HepG2 (cell line): ENCODE measurements at regions of chr2 and their contacts with region 1.

Region 1: GRCh38 chr2:195106681-195107380 is 550.2 kb upstream of the SLC39A10 start:
- DNase-seq: no peak
- ATAC-seq: no peak
- H3K4me3 ChIP-seq: no peak overlapping the region
- H3K27ac ChIP-seq: no peak overlapping the region
- H3K4me1 ChIP-seq: no peaks in the 10 kb centered on the region
- H3K27me3 ChIP-seq: no peaks in the 10 kb centered on the region
- CTCF ChIP-seq: no peak
- EP300 ChIP-seq: no peak
- POLR2A ChIP-seq: no peak
- RAD21 ChIP-seq: no peak

Region 2: DNA sequence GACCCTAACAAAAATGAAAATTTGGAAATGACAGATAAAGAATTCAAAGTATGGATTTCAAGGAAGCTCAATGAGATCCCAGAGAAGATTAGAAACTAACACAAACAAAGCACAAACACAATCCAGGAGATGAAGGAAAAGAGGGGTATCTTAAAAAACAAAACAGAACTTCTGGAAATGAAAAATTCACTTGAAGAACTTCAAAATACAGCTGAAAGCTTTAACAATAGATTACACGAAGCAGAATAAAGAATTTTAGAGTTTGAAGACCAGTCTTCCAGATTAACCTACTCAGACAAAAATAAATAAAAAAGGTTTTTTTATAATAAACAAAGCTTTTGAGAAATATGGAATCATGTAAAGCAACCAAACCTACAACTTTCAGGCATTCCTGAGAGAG is 121.6 kb before region 1 on chr2:
- CTCF ChIA-PET with region 1: no interaction called
- POLR2A ChIA-PET with region 1: no interaction called
- in situ Hi-C with region 1: no loop called
- intact Hi-C with region 1: no loop called
- DNase-seq: no peak
- ATAC-seq: no peak
- H3K4me3 ChIP-seq: no peak overlapping the region
- H3K27ac ChIP-seq: no peak overlapping the region
- H3K4me1 ChIP-seq: no peaks in the 10 kb centered on the region
- H3K27me3 ChIP-seq: no peaks in the 10 kb centered on the region
- CTCF ChIP-seq: no peak
- EP300 ChIP-seq: no peak
- POLR2A ChIP-seq: no peak
- RAD21 ChIP-seq: no peak

Region 3: GRCh38 chr2:195021711-195022507 is 84.9 kb before region 1 on chr2:
- CTCF ChIA-PET with region 1: no interaction called
- POLR2A ChIA-PET with region 1: no interaction called
- in situ Hi-C with region 1: no loop called
- intact Hi-C with region 1: no loop called
- DNase-seq: no peak
- ATAC-seq: no peak
- H3K4me3 ChIP-seq: no peak overlapping the region
- H3K27ac ChIP-seq: no peak overlapping the region
- H3K4me1 ChIP-seq: no peaks in the 10 kb centered on the region
- H3K27me3 ChIP-seq: no peaks in the 10 kb centered on the region
- CTCF ChIP-seq: no peak
- EP300 ChIP-seq: no peak
- POLR2A ChIP-seq: no peak
- RAD21 ChIP-seq: no peak

Region 4: DNA sequence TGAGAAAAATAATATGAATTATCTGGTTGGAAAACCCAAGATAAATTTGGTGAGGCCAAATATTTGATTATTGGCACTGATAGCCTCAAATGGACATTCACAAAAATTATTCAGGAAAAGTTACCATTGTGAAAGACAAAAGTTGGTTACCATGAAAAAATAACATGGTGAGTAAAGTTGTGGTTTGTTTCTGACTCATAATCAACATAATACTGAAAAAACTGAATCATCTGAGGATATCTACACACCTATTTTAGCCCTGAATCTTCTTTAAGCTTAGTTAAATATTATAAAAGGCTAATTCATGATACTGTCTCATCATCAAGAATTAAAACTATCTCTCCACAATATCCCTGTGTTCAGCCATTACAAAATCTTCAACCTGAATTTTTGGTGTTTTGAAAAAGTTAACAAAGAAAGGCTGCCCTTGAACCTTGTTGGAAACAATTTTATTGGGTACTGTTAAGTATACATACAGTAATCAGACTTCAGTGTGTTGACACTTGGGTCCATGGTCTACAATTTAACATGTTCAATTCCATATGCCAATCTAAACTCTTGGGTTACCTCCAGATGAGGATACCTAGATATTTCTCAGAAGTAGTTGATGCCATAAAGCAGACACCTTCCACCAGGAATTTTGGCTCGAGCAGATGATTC is 57.3 kb before region 1 on chr2:
- CTCF ChIA-PET with region 1: no interaction called
- POLR2A ChIA-PET with region 1: no interaction called
- in situ Hi-C with region 1: no loop called
- intact Hi-C with region 1: no loop called
- DNase-seq: no peak
- ATAC-seq: no peak
- H3K4me3 ChIP-seq: no peak overlapping the region
- H3K27ac ChIP-seq: no peak overlapping the region
- H3K4me1 ChIP-seq: no peaks in the 10 kb centered on the region
- H3K27me3 ChIP-seq: no peaks in the 10 kb centered on the region
- CTCF ChIP-seq: no peak
- EP300 ChIP-seq: no peak
- POLR2A ChIP-seq: no peak
- RAD21 ChIP-seq: no peak

Region 5: GRCh38 chr2:195138435-195138834 is 31.6 kb after region 1 on chr2:
- CTCF ChIA-PET with region 1: no interaction called
- POLR2A ChIA-PET with region 1: no interaction called
- in situ Hi-C with region 1: no loop called
- intact Hi-C with region 1: loop called (anchors 1 kb)
- DNase-seq: no peak
- ATAC-seq: no peak
- H3K4me3 ChIP-seq: no peak overlapping the region
- H3K27ac ChIP-seq: no peak overlapping the region
- H3K4me1 ChIP-seq: no peaks in the 10 kb centered on the region
- H3K27me3 ChIP-seq: no peaks in the 10 kb centered on the region
- CTCF ChIP-seq: no peak
- EP300 ChIP-seq: no peak
- POLR2A ChIP-seq: no peak
- RAD21 ChIP-seq: no peak